ENCODE measurements at regions of chr1 and their contacts with region 1.

Region 1: DNA sequence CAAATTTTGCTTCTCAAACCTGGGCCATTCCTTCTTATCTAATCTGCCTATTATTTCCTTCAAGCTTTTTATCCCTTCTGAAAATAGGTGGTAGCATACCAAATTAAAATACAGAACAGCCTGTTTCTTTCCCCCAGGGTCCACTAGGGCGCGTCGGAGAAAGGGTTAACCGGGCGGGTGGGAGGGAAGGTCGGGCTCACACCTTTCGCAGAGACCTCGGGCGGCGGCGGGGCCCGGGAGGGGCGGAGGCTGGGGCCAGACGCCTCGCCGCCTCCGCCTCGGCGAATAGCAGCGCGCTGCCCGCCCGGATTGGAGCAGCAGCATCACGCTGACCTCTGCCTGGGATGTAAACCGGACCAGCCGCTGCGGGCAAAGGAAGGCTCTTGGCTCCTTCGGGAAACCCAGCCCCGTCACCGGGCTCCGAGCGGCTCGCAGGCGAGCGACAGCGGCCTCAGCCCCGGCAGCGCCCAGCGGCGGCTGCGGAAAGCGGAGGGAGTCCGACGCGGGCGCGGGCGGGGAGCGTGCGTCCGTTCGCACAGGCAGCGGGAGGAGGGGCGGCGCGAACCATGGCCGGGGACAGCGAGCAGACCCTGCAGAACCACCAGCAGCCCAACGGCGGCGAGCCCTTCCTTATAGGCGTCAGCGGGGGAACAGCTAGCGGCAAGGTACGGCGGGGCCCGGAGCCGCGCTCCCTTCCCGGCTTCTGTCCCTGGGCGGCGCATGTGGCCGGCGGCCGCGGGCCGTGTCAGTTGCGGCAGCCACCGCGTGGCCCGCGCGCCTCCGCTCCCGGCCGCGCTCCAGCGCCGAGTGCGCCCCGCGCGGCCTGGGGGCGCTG is at the start of gene UCK2:
- DNase-seq: peak; percentile 59
- H3K4me3 Mint-ChIP-seq: peak within 1 kb of the TSS; percentile 89
- H3K27ac Mint-ChIP-seq: peak within 1 kb of the TSS; percentile 81
- H3K4me1 Mint-ChIP-seq: peaks cover 25% of the 10 kb centered on the region
- H3K27me3 Mint-ChIP-seq: peaks cover 8% of the 10 kb centered on the region
- total RNA-seq, gene UCK2: 94.3 and 100 TPM in 2 replicates

Region 2: DNA sequence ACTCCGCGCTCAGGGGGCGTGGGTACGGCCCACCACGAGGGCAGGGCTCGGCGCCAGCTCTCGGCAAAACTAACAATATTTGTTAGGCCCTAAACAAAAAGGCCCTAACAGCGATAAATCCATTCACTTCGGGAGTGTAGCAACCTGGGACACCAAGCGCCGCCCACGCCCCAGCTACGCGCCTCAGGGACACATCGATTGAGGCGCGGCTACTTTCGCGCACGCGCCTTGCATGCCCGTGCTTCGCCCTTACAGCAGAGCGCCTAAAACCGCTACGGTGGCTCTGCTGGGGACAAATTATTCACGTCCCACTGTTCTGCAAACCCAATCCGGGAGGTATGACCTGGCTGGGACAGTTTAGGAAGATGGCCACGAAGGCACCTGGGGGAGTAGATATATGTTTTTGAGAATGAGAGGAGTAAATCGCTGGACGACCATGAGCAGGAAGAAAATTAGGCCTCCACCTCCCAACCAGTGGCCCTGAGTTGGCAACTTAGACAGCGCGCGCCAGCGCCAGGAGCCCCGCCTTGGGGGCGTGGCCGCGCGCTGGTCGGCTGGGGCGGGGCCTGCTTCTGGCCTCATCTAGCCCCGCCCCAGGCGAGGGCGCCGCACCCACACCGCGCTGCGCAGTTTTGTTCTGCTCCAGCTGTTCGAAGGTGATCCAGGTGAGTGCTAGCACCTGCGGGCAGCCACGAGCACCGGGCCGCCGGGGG is 196.7 kb before region 1 on chr1 and contains the start of gene MGST3:
- intact Hi-C with region 1: loop called (anchors 1 kb)
- DNase-seq: peak; percentile 93
- H3K4me3 Mint-ChIP-seq: no peak within 1 kb of the TSS
- H3K27ac Mint-ChIP-seq: peak within 1 kb of the TSS; percentile 52
- H3K4me1 Mint-ChIP-seq: peaks cover 23% of the 10 kb centered on the region
- H3K27me3 Mint-ChIP-seq: peaks cover 6% of the 10 kb centered on the region
- total RNA-seq, gene MGST3: 63.6 and 63.7 TPM in 2 replicates

Region 3: DNA sequence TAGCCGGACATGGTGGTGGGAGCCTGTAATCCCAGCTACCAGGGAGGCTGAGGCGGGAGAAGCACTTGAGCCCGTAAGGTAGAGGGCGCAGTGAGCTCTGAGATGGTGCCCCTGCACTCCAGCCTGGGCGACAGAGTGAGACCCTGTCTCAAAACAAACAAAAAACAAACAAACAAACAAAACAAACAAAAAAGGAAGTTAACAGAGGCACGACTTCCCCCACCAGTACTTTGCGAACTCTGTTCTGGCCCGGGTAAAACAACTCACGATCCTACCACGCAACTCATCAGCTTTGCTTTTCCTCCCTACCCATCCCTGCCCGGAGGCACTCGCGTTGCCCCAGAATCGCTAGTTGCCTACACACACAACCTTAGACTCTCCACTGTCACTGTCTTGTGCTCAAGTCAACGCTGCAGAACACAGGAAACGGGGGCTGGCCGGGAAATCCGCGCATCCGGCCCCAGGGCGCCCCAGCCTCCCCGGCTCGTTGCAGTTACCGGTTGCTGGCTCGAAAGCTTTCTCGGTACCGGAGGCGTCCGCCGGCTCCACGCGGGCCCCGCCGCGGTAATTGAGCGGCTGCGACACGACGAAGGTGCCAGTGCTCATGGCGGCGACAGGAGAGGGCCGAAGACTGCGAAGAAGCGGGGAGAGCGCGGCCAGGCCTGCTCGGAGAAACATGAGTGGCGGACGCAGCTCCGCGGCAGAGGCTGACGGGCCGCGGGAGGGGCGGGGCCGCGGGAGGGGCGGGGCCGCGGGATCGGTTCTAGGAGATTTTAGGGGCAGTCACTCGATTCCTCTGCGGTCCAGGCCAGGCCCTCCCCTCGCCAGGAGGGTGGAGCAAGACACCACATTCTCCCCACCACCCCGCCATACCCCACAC is 129.4 kb before region 1 on chr1 and contains the start of gene ALDH9A1:
- intact Hi-C with region 1: loop called (anchors 5 kb)
- DNase-seq: peak; percentile 84
- H3K4me3 Mint-ChIP-seq: peak within 1 kb of the TSS; percentile 100
- H3K27ac Mint-ChIP-seq: peak within 1 kb of the TSS; percentile 99
- H3K4me1 Mint-ChIP-seq: peaks cover 18% of the 10 kb centered on the region
- H3K27me3 Mint-ChIP-seq: peaks cover 3% of the 10 kb centered on the region
- total RNA-seq, gene ALDH9A1: 43.3 and 47.4 TPM in 2 replicates

Region 4: DNA sequence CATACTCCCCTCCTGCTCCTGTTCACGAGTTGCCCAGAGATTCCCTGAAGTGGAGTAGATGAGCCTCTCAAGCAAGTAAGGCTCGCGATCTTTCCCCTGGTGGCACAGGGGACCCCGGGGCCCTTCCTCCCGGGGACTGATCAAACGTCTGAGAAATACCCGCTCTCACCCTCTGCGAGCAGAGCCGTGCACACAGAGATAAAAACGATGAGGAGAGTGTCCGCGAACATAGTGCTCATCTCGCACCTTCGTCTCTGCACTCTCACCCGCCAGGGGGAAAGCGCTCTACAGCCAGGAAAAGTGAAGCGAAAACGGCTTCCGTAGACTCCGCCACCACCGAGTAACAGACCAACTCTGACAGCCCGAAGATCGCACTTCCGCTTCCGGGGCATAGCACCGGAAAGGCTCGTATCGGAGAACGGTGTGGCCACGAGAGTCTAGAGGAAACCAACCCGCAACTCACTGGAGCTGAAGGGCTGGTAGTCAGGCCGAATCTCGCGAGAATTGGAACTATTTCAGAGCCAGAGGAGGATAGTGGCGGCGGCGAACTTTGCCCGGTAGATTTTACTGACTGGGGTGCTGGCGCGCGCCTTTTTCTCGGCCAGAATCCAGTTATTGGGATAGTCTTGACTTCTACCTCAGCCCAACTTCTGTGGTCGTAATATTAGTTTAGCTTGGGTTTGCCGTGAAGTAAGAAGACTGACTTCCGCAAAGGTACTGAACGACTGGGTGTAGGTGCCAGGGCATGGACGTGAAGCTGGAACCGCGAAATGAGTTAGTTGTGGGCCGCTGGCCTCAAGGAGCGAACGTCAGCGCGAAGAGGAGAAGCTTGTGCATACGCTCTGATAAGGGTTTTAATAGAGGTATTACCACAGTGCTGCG is 58.7 kb before region 1 on chr1 and contains the start of gene TMCO1:
- intact Hi-C with region 1: loop called (anchors 1 kb)
- DNase-seq: peak; percentile 95
- H3K4me3 Mint-ChIP-seq: peak within 1 kb of the TSS; percentile 94
- H3K27ac Mint-ChIP-seq: peak within 1 kb of the TSS; percentile 96
- H3K4me1 Mint-ChIP-seq: peaks cover 38% of the 10 kb centered on the region
- H3K27me3 Mint-ChIP-seq: no peaks in the 10 kb centered on the region
- total RNA-seq, gene TMCO1: 83.3 and 85.8 TPM in 2 replicates

Region 5: GRCh38 chr1:165851034-165851658 is 23.7 kb after region 1 on chr1:
- intact Hi-C with region 1: loop called (anchors 2 kb)
- DNase-seq: peak; percentile 19
- H3K4me3 Mint-ChIP-seq: peak overlapping the region; percentile 20
- H3K27ac Mint-ChIP-seq: no peak overlapping the region
- H3K4me1 Mint-ChIP-seq: peaks cover 70% of the 10 kb centered on the region
- H3K27me3 Mint-ChIP-seq: no peaks in the 10 kb centered on the region

Region 6: DNA sequence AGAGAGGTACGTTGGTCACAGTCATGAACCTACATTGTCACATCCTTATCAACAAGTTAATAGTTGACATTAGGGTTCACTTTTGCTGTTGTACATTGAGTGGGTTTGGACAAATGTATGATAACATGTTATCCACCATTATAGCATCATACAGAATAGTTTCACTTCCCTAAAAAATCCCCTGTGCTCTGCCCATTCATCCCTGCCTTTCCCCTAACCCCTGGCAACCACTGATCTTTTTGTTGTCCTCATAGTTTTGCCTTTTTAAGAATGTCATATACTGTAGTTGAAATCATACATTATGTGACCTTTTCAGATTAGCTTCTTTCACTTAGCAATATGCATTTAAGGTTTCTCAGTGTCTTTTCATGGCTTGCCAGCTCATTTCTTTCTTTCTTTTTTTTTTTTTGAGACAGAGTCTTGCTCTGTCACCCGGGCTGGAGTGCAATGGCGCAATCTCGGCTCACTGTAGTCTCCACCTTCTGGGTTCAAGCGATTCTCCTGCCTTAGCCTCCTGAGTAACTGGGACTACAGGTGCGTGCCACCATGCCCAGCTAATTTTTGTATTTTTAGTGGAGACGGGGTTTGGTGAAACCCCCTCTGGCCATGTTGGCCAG is 50.6 kb after region 1 on chr1:
- intact Hi-C with region 1: loop called (anchors 2 kb)
- DNase-seq: no peak
- H3K4me3 Mint-ChIP-seq: no peak overlapping the region
- H3K27ac Mint-ChIP-seq: peak overlapping the region; percentile 56
- H3K4me1 Mint-ChIP-seq: peaks cover 71% of the 10 kb centered on the region
- H3K27me3 Mint-ChIP-seq: no peaks in the 10 kb centered on the region

Region 7: DNA sequence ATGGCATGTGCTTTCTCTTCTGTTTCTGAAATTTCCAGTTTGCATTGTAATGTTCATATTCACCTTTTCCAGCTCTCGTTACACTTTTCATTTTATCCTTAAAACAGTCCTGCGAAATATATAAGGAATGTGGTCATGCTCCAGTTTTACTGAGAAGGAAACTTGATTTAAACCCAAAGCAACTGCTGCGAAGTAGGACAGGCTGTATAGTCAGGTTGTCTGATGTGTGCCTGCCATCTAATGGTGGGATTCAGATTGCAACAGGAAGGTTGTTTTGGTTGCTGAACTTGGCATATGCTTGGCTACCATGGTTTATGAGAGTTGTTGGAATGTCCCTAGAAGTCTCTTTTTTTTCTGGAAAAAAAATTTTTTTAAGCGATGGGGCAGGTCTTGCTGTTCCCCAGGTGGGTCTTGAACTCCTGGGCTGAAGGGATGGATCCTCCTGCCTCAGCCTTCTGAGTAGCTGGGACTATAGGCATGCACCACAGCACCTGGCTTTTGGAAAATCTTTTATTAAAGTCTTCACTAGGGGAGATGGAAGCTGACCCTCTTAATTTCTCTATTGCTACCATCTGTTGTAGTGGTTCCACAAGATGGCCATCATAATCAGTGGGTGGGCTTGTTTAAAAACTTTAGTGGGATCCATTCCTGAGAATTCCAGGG is 86.8 kb after region 1 on chr1:
- intact Hi-C with region 1: loop called (anchors 1 kb)
- DNase-seq: peak; percentile 56
- H3K4me3 Mint-ChIP-seq: no peak overlapping the region
- H3K27ac Mint-ChIP-seq: no peak overlapping the region
- H3K4me1 Mint-ChIP-seq: peaks cover 5% of the 10 kb centered on the region
- H3K27me3 Mint-ChIP-seq: no peaks in the 10 kb centered on the region

Measured in activated T-helper 2 cell treated with anti-CD3 and anti-CD28 coated beads, Interferon-gamma antibody, Interleukin-2, Interleukin-4, amounts not matched to agents 10 μg/mL and 5 μg/mL and 100 μg/mL, durations not matched to agents 14 hours and 24 hours and 36 hours (primary cell).